Aorta (tissue), 5 donors: ENCODE measurements at regions of chr2 and their contacts with region 1.

Region 1: DNA sequence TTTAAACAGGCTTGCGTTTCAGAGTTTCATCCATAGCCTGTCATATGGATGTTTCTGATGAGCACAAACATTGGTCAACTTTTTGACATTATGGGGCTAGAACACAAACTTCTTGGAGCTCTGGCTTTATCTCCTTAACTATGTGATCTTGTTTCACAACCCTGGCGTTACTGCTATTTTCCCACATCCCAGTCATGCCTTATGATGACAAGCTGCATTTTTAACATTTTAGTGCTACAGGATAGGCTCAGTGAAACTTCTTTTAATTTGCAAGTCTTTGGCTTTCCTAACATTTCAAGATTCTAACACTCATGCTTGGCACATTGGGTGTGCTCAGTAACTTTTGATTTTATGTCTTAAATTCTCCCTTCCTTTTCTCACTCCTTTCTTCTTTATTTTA is 21.0 kb upstream of the PDE1A start:
- DNase-seq: no peak
- ATAC-seq: no peak
- H3K4me3 ChIP-seq: no peak overlapping the region
- H3K27ac ChIP-seq: no peak overlapping the region
- H3K4me1 ChIP-seq: peaks cover 2 to 8% of the 10 kb centered on the region in 2 donors
- H3K27me3 ChIP-seq: no peaks in the 10 kb centered on the region

Region 2: DNA sequence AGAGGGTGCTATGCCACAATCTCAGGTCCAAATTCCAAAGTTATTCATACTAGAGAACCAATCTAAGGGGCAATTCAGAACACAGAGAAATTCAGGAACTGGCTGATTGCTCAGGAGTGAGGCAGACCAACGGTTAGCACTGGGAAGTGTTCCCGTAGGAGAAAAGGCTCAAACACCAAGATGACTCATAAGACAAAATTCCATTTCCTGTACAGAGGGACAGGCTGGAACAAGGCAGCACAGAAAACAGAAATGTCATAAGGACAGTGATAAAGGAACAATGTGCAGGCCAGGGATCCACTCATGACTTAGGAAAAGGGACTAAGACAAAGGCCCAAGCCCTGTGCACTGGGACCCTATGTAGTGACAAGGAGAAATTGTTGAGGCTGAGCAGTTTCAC is 75.2 kb before region 1 on chr2:
- intact Hi-C with region 1: loop called in 1 of 2 experiments (anchors 10 kb)
- DNase-seq: peak in 1 of 2 donors; percentile 51
- ATAC-seq: peak; percentile 91
- H3K4me3 ChIP-seq: no peak overlapping the region
- H3K27ac ChIP-seq: peak overlapping the region; percentile 91 to 93
- H3K4me1 ChIP-seq: peaks cover 0 to 3% of the 10 kb centered on the region in 2 donors
- H3K27me3 ChIP-seq: no peaks in the 10 kb centered on the region